BJ (cell line): ENCODE measurements at regions of chr2 and their contacts with region 1.

Region 1: GRCh38 chr2:31318361-31319336 is 84.7 kb downstream of the EHD3 start:
- DNase-seq: no peak
- H3K4me3 ChIP-seq: no peak overlapping the region
- H3K27me3 ChIP-seq: no peaks in the 10 kb centered on the region
- CTCF ChIP-seq: no peak

Region 2: DNA sequence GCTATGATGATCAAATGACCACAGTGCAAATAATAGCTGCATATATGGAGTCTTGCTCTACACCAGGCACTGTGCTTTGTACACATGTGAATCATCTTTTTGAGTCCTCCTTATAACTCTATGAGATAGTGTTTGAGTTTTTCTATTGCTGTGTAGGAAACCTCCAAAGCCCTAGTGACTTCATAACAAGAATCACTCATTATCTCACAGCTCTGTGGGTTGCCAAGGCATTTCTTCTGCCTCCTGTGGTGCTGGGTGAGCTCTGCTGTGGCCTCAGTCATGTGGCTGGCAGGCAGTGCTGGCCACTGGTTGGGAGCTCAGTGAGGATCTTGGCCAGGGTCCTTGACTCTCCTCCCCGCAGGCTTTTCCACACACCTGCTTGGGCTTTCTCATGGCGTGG is 664.8 kb before region 1 on chr2:
- CTCF ChIA-PET with region 1: no interaction called
- POLR2A ChIA-PET with region 1: interaction called, 11 read pairs
- DNase-seq: no peak
- H3K4me3 ChIP-seq: no peak overlapping the region
- H3K27me3 ChIP-seq: no peaks in the 10 kb centered on the region
- CTCF ChIP-seq: no peak